ENCODE measurements at regions of chr7 and their contacts with region 1.

Region 1: DNA sequence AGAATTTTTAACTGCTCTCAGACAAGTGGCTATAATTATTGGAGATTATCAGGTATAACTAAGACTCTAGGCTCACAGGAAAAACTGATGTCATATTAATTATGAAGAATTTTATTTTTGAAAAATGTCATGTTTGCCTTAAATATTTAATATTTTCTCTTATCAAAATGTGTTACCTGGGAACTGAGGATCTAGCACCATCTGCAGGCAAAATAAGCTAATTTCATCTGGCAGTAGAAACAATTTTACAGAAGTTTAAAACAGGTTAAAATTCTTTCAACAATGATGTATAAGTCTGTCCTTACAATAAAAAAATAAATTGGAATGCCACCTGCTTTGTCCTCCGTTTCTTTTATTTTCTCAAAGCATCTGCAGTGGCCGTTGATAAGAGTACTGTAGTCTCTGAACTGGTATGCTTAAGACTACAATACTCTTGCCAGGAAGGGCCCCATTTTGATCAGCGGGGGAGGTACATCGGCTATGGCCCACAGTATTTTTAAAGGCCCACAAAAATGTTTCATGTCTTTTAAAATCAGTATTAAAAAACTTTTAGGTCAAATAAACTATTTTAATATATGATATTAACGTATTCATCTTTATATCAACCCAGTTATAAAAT is 81.3 kb downstream of the VWDE start:
- DNase-seq: peak; percentile 10
- H3K4me3 ChIP-seq: no peak overlapping the region
- H3K27ac ChIP-seq: no peak overlapping the region
- H3K4me1 ChIP-seq: no peaks in the 10 kb centered on the region; a peak in 1 of 4 replicates
- H3K27me3 ChIP-seq: no peaks in the 10 kb centered on the region
- CTCF ChIP-seq: peak; percentile 97
- EP300 ChIP-seq: no peak
- RAD21 ChIP-seq: peak; percentile 94

Region 2: GRCh38 chr7:11427686-11428273 is 894.6 kb before region 1 on chr7:
- CTCF ChIA-PET with region 1: interaction called, 11 read pairs
- POLR2A ChIA-PET with region 1: no interaction called
- DNase-seq: peak; percentile 76
- H3K4me3 ChIP-seq: no peak overlapping the region; a peak in 1 of 4 replicates
- H3K27ac ChIP-seq: peak overlapping the region in 1 of 2 experiments; percentile 60; a peak in 2 of 4 replicates
- H3K4me1 ChIP-seq: peaks cover 0 to 11% of the 10 kb centered on the region in 2 experiments; a peak in 2 of 4 replicates
- H3K27me3 ChIP-seq: no peaks in the 10 kb centered on the region
- CTCF ChIP-seq: peak; percentile 98
- EP300 ChIP-seq: no peak
- RAD21 ChIP-seq: peak; percentile 97

Region 3: GRCh38 chr7:12056381-12056780 is 266.0 kb before region 1 on chr7:
- CTCF ChIA-PET with region 1: interaction called, 11 read pairs
- POLR2A ChIA-PET with region 1: no interaction called
- DNase-seq: no peak
- H3K4me3 ChIP-seq: no peak overlapping the region
- H3K27ac ChIP-seq: no peak overlapping the region
- H3K4me1 ChIP-seq: no peaks in the 10 kb centered on the region
- H3K27me3 ChIP-seq: no peaks in the 10 kb centered on the region
- CTCF ChIP-seq: no peak
- EP300 ChIP-seq: no peak
- RAD21 ChIP-seq: no peak

Region 4: DNA sequence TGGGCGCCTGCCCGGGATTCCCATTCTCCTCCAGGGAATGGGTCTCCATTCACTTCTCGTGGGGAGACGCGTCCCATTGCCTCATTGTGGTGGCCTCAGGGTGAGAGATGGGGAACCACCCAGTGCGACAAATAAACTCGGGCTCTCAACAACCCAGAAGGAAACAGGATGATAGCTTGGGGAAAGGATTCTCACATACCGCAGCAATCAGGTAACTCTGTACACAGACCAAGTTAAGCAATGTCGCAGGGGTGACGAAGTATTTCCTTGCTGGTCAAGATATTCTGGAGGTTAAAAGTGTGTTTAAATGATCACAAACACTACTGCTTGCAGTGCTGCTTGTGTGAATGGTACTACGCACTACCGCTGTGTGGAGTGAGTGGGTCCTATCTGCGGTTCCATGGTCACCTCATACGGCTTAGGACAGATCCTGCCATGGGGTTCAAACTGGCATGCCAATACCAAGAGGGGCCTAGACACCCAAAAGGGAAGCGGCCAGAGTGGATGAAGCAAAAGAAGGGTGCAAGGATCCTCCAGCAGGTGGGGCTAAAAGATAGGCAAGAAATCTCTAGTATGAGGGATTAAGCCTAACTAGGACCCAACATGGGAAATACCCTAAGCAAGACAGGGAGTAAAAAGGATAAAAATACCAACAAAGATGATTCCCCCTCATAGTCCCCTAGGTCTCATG is 255.1 kb before region 1 on chr7:
- CTCF ChIA-PET with region 1: interaction called, 52 read pairs
- POLR2A ChIA-PET with region 1: no interaction called
- DNase-seq: peak; percentile 60
- H3K4me3 ChIP-seq: no peak overlapping the region; a peak in 1 of 4 replicates
- H3K27ac ChIP-seq: no peak overlapping the region
- H3K4me1 ChIP-seq: peaks cover 0 to 4% of the 10 kb centered on the region in 2 experiments; a peak in 2 of 4 replicates
- H3K27me3 ChIP-seq: no peaks in the 10 kb centered on the region
- CTCF ChIP-seq: peak; percentile 78
- EP300 ChIP-seq: no peak
- RAD21 ChIP-seq: peak; percentile 98

Region 5: GRCh38 chr7:12923971-12924370 is 601.6 kb after region 1 on chr7:
- CTCF ChIA-PET with region 1: no interaction called
- POLR2A ChIA-PET with region 1: no interaction called
- DNase-seq: no peak
- H3K4me3 ChIP-seq: no peak overlapping the region
- H3K27ac ChIP-seq: no peak overlapping the region
- H3K4me1 ChIP-seq: no peaks in the 10 kb centered on the region
- H3K27me3 ChIP-seq: peaks cover 13% of the 10 kb centered on the region
- CTCF ChIP-seq: no peak
- EP300 ChIP-seq: no peak
- RAD21 ChIP-seq: no peak

Measured in SK-N-SH (cell line).